Testis (tissue), 5 donors: ENCODE measurements at regions of chr3 and their contacts with region 1.

Region 1: DNA sequence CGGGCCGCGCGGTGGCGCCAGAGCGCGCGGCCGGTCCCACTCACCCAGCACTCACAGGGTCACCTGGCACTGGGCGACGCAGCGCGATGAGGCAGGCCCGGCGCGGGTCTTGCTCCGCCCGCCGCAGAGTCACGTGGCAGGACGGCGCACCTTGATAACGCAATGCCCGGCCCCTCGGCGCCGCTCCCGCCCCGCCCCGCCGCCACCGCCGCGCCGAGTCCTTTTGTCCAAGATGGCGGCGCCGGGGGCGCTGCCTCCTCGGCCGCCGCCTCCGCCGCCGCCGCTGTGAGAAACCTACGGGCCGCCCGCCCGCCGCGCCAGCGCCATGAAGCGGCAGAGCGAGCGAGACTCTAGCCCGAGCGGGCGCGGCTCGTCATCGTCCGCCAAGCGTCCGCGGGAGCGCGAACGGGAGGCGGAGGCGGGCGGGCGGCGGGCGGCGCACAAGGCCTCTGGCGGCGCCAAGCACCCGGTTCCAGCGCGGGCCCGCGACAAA is at the start of gene RBM15B:
- DNase-seq: peak; percentile 97
- H3K4me3 ChIP-seq: peak within 1 kb of the TSS; percentile 68 to 96
- H3K27ac ChIP-seq: peak within 1 kb of the TSS; percentile 79 to 91
- H3K4me1 ChIP-seq: peaks cover 38% of the 10 kb centered on the region
- H3K27me3 ChIP-seq: no peaks in the 10 kb centered on the region
- CTCF ChIP-seq: peak in 2 of 3 experiments; percentile 95 to 98
- POLR2A ChIP-seq: no peak
- total RNA-seq, gene RBM15B: 33.9 to 41.4 TPM

Region 2: GRCh38 chr3:51498876-51499738 is 108.0 kb after region 1 on chr3:
- intact Hi-C with region 1: loop called (anchors 10 kb)
- DNase-seq: peak; percentile 97
- H3K4me3 ChIP-seq: peak overlapping the region; percentile 86 to 96
- H3K27ac ChIP-seq: peak overlapping the region; percentile 95 to 96
- H3K4me1 ChIP-seq: peaks cover 21% of the 10 kb centered on the region
- H3K27me3 ChIP-seq: no peaks in the 10 kb centered on the region
- CTCF ChIP-seq: no peak
- POLR2A ChIP-seq: no peak

Region 3: DNA sequence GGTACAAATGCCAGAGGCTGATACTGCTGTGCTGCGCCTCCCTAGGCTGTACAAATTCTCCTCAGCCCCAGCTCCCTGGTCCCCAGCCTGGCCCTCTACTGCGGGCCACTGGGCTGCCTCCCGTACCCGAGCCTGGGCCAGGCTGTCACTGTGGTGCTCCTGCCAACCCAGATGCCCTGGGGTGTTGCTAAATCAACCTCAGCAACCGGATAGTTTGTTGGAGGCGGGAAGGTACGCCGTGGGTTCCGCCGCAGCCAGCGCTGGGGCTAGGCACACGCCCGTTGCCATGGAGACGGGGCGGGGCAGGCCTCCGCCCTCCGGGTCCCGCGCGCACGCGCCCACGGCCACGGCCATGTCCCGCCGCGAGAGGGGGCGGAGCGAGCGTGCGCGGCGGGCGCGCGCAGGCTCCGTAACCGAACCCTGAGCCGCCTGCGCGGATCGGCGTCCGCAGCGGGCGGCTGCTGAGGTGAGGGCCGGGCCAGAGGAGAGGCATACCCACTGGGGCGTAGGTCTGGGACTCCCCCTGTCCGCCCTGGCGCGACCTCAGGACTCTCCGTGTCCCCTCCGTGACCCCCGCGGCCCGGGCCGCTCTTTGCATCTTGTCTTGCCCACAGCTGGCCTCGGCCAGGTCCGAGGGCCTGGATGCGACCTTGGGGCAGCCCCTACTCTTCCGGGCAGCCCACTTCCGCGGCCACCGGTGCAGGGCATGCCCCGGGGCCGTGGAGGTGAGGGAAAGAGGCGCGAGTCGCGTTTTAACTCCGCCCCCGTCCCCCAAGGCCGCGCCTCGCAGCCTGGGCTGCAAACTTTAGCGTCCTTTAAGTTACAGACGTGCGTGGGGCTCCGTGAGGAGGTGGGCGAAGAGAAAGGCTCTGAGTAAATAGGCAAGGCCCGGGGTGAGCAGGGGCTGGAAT is 280.0 kb after region 1 on chr3 and contains the start of gene TEX264:
- intact Hi-C with region 1: loop called (anchors 10 kb)
- DNase-seq: peak; percentile 93
- H3K4me3 ChIP-seq: peak within 1 kb of the TSS; percentile 76 to 99
- H3K27ac ChIP-seq: peak within 1 kb of the TSS; percentile 83 to 92
- H3K4me1 ChIP-seq: peaks cover 20% of the 10 kb centered on the region
- H3K27me3 ChIP-seq: no peaks in the 10 kb centered on the region
- CTCF ChIP-seq: no peak
- POLR2A ChIP-seq: peak; percentile 37
- total RNA-seq, gene TEX264: 241 to 251 TPM